Activated T-helper 1 cell treated with anti-CD3 and anti-CD28 coated beads, Interleukin-12 subunit alpha, Interleukin-12 subunit beta, Interleukin-2, Interleukin-4 antibody, amounts not matched to agents 30 ng/mL and 10 ng/mL and 1 ng/mL, durations not matched to agents 14 hours and 24 hours and 36 hours (primary cell): ENCODE measurements at regions of chr21 and their contacts with region 1.

Region 1: GRCh38 chr21:45768751-45769070 is 125.2 kb downstream of the PCBP3 start:
- DNase-seq: no peak
- H3K4me3 Mint-ChIP-seq: peak overlapping the region; percentile 25
- H3K27ac Mint-ChIP-seq: peak overlapping the region; percentile 95
- H3K4me1 Mint-ChIP-seq: peaks cover 36% of the 10 kb centered on the region
- H3K27me3 Mint-ChIP-seq: no peaks in the 10 kb centered on the region

Region 2: GRCh38 chr21:45698493-45699184 is 70.1 kb before region 1 on chr21:
- intact Hi-C with region 1: loop called (anchors 5 kb)
- DNase-seq: no peak
- H3K4me3 Mint-ChIP-seq: no peak overlapping the region
- H3K27ac Mint-ChIP-seq: no peak overlapping the region
- H3K4me1 Mint-ChIP-seq: peaks cover 31% of the 10 kb centered on the region
- H3K27me3 Mint-ChIP-seq: no peaks in the 10 kb centered on the region

Region 3: DNA sequence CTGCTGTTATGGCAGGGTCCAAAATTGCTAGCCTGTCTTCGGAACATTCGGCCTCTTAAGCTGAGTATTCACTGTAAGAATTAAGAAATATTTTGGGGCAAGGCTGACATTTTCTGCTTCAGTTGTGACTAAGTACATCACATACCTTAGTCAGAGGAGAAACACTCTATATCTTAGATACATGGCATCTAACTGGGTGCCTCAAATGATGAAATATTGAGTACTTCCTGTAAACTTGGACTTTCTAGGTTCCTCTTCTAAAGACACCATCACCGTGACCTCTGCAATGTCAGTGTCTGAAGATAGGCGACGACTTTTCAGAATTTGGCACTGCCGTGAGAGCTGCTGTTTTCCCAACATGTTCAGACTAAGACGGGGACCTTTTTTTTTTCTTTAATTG is 59.5 kb before region 1 on chr21:
- intact Hi-C with region 1: no loop called
- DNase-seq: no peak
- H3K4me3 Mint-ChIP-seq: no peak overlapping the region
- H3K27ac Mint-ChIP-seq: no peak overlapping the region
- H3K4me1 Mint-ChIP-seq: peaks cover 5% of the 10 kb centered on the region
- H3K27me3 Mint-ChIP-seq: no peaks in the 10 kb centered on the region

Region 4: DNA sequence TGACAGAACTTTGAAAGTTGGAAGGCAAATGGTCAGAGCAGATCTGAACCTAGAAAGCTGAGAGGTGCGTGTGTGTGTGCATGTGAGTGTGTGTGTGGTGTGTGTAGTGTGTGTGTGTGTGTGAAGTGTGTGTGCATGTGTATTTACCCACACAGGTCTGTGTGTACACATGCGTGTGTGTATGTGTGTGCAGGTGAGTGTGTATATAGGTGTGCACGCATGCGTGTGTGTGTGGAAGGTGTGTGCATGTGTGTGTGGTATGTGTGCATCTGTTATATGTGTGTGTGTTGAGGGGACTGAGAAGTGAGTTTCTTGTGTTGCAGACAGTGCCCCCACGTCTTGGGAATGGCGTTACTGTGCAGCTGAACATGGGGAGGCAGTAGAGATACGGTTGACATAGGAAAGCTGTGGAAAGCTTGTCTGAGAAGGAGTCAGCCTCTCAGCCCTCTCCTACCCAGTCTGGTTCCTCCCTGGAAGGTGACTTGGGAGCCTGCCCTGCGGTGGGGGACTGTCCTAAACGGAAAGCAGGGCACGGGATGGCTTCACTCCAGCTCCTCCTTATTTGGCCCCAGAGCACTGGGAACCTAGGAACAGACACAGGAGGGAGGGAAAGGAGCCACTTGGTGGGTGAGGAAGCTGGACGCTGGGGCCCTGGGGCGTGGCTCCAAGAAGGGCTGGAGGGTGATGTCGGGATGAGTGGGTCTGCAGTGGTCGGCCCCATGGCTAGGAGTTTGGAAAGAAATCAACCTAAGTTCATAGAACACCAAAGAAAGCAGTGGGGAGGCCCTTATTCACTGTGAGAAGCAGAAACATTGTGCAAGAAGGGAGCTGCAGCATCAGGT is 28.0 kb before region 1 on chr21:
- intact Hi-C with region 1: loop called (anchors 1 kb)
- DNase-seq: no peak
- H3K4me3 Mint-ChIP-seq: no peak overlapping the region
- H3K27ac Mint-ChIP-seq: no peak overlapping the region
- H3K4me1 Mint-ChIP-seq: peaks cover 11% of the 10 kb centered on the region
- H3K27me3 Mint-ChIP-seq: peaks cover 1% of the 10 kb centered on the region